Naive thymus-derived CD4-positive, alpha-beta T cell (primary cell): ENCODE measurements at regions of chr7 and their contacts with region 1.

Region 1: GRCh38 chr7:140096459-140096858 is 33.7 kb upstream of the PARP12 start:
- DNase-seq: no peak
- ATAC-seq: no peak
- H3K4me3 ChIP-seq: no peak overlapping the region
- H3K4me3 Mint-ChIP-seq: no peak overlapping the region
- H3K27ac ChIP-seq: no peak overlapping the region
- H3K27ac Mint-ChIP-seq: peak overlapping the region in 2 of 9 donors; percentile 9 to 71
- H3K4me1 ChIP-seq: no peaks in the 10 kb centered on the region
- H3K4me1 Mint-ChIP-seq: peaks cover 0 to 5% (median 0%) of the 10 kb centered on the region in 7 donors
- H3K27me3 ChIP-seq: no peaks in the 10 kb centered on the region
- H3K27me3 Mint-ChIP-seq: no peaks in the 10 kb centered on the region

Region 2: GRCh38 chr7:140079121-140079536 is 17.3 kb before region 1 on chr7:
- CTCF ChIA-PET with region 1: no interaction called
- POLR2A ChIA-PET with region 1: no interaction called
- intact Hi-C with region 1: loop called in 1 of 2 experiments (anchors 2 kb)
- DNase-seq: no peak
- ATAC-seq: peak; percentile 40
- H3K4me3 ChIP-seq: no peak overlapping the region
- H3K4me3 Mint-ChIP-seq: no peak overlapping the region
- H3K27ac ChIP-seq: no peak overlapping the region
- H3K27ac Mint-ChIP-seq: peak overlapping the region in 2 of 9 donors; percentile 25 to 77
- H3K4me1 ChIP-seq: peaks cover 0 to 5% of the 10 kb centered on the region in 2 donors
- H3K4me1 Mint-ChIP-seq: peaks cover 7 to 19% (median 13%) of the 10 kb centered on the region in 7 donors
- H3K27me3 ChIP-seq: no peaks in the 10 kb centered on the region
- H3K27me3 Mint-ChIP-seq: peaks cover 0 to 2% (median 0%) of the 10 kb centered on the region in 5 donors

Region 3: GRCh38 chr7:140159487-140159886 is 63.0 kb after region 1 on chr7:
- CTCF ChIA-PET with region 1: no interaction called
- POLR2A ChIA-PET with region 1: no interaction called
- intact Hi-C with region 1: no loop called
- DNase-seq: no peak
- ATAC-seq: no peak
- H3K4me3 ChIP-seq: no peak overlapping the region
- H3K4me3 Mint-ChIP-seq: no peak overlapping the region
- H3K27ac ChIP-seq: no peak overlapping the region
- H3K27ac Mint-ChIP-seq: no peak overlapping the region
- H3K4me1 ChIP-seq: peaks cover under 1 to 31% of the 10 kb centered on the region in 2 donors
- H3K4me1 Mint-ChIP-seq: peaks cover 44 to 89% (median 75%) of the 10 kb centered on the region in 7 donors
- H3K27me3 ChIP-seq: no peaks in the 10 kb centered on the region
- H3K27me3 Mint-ChIP-seq: no peaks in the 10 kb centered on the region